ENCODE measurements at regions of chr1 and their contacts with region 1.

Region 1: GRCh38 chr1:21368515-21369289 is 71.2 kb upstream of the NBPF3 start:
- DNase-seq: peak; percentile 59
- H3K4me3 ChIP-seq: no peak overlapping the region
- H3K27ac ChIP-seq: no peak overlapping the region
- H3K27me3 ChIP-seq: no peaks in the 10 kb centered on the region
- CTCF ChIP-seq: peak; percentile 100

Region 2: DNA sequence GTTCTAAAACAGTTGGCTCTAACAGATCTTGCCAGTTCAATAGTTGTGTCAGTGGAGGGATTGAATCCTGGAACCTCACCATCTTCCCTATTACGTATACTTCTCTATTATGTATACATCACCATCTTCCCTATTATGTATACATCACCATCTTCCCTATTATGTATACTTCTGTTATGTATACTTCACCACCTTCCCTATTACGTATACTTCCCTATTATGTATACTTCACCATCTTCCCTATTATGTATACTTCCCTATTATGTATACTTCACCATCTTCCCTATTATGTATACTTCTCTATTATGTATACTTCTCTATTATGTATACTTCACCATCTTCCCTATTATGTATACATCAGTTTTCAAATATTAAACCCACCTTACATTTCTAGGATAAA is 547.2 kb before region 1 on chr1:
- CTCF ChIA-PET with region 1: interaction called, 11 read pairs
- POLR2A ChIA-PET with region 1: no interaction called
- DNase-seq: no peak
- H3K4me3 ChIP-seq: no peak overlapping the region
- H3K27ac ChIP-seq: no peak overlapping the region
- H3K27me3 ChIP-seq: no peaks in the 10 kb centered on the region
- CTCF ChIP-seq: no peak

Region 3: GRCh38 chr1:21225065-21225464 is 143.6 kb before region 1 on chr1:
- CTCF ChIA-PET with region 1: interaction called, 13 read pairs
- POLR2A ChIA-PET with region 1: no interaction called
- DNase-seq: no peak
- H3K4me3 ChIP-seq: no peak overlapping the region
- H3K27ac ChIP-seq: no peak overlapping the region
- H3K27me3 ChIP-seq: no peaks in the 10 kb centered on the region
- CTCF ChIP-seq: no peak

Region 4: DNA sequence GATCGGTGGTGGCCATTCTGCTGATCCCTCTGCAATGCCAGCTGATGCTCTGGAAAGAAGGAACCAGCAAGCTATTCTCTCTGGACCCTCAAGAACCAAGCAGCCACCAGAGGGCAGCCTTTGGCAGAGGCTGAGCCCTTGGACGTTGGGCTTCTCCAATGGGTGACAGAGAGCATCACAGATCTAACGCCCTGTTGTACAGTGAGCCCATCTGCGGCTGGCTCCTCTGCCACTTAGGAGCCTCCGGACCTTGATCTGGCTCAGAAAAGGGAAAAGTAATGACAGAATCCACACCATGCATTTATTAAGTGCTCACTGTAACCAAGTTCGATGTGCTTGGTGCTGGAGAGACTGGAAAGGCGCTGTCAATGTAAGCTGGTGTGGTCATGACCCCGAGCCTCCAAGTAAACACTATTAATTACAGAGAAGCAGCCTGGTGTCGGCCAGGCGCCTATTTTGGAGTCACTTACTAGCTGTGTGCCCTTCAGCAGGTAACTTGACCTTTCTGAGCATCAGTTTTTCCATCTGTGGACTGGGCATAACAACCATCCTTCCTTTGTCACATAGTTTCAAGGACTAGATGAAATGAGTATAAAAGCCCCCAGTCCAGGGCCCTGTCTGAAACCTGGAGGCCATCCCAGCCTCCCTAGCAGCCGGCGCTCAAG is 113.3 kb before region 1 on chr1:
- CTCF ChIA-PET with region 1: interaction called, 283 read pairs
- POLR2A ChIA-PET with region 1: interaction called, 3 read pairs
- DNase-seq: peak; percentile 50
- H3K4me3 ChIP-seq: no peak overlapping the region
- H3K27ac ChIP-seq: no peak overlapping the region
- H3K27me3 ChIP-seq: no peaks in the 10 kb centered on the region
- CTCF ChIP-seq: peak; percentile 93

Region 5: DNA sequence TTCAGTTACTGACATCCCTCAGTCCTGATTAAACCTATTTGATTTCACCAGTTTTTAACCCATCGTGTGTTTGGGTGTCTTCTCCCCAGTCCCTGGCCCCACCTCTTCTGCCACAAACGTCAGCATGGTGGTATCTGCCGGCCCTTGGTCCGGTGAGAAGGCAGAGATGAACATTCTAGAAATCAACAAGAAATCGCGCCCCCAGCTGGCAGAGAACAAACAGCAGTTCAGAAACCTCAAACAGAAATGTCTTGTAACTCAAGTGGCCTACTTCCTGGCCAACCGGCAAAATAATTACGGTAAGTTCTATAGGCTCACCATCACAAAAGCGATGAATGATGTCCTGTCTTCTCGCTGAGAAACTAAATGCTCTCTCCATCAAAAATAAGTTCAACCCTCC is 99.9 kb after region 1 on chr1:
- CTCF ChIA-PET with region 1: interaction called, 15 read pairs
- POLR2A ChIA-PET with region 1: no interaction called
- DNase-seq: no peak
- H3K4me3 ChIP-seq: no peak overlapping the region
- H3K27ac ChIP-seq: no peak overlapping the region
- H3K27me3 ChIP-seq: no peaks in the 10 kb centered on the region
- CTCF ChIP-seq: peak; percentile 43; the same call in 1 of the 2 replicates

Region 6: DNA sequence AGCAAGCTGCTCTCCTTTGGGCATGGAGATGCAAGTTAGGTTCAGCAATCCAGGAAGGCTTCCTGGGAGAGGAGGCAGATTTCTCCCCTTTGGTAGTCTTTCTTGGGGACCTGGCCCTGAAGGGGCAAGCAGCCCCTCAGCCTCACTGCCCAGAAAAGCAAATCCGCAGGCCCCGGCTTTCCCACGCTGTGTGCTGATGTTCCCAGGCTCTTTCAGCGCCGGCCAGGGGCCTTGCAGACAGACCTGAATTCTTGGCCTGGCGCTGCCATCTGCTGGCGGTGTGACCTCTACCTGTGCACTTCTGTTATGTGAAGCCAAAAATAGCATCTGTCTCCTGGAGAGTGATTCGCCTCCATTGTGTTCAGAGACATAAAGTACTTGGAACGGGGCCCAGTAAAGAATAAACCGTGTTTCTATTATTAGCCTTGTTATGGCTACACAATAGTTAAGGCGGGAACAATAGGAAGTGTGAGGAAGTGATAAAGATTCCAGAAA is 205.3 kb after region 1 on chr1:
- CTCF ChIA-PET with region 1: interaction called, 35 read pairs
- POLR2A ChIA-PET with region 1: no interaction called
- DNase-seq: no peak
- H3K4me3 ChIP-seq: no peak overlapping the region
- H3K27ac ChIP-seq: no peak overlapping the region
- H3K27me3 ChIP-seq: no peaks in the 10 kb centered on the region
- CTCF ChIP-seq: peak; percentile 68

Measured in AG04450 (cell line).